Colonic mucosa (tissue), 4 donors: ENCODE measurements at regions of chr10 and their contacts with region 1.

Region 1: GRCh38 chr10:2978111-2978510 is 89.2 kb upstream of the PFKP start:
- DNase-seq: no peak
- H3K4me3 ChIP-seq: no peak overlapping the region
- H3K27ac ChIP-seq: no peak overlapping the region
- H3K4me1 ChIP-seq: no peaks in the 10 kb centered on the region
- H3K27me3 ChIP-seq: no peaks in the 10 kb centered on the region
- CTCF ChIP-seq: peak; percentile 35

Region 2: GRCh38 chr10:2839081-2839725 is 138.9 kb before region 1 on chr10:
- intact Hi-C with region 1: loop called (anchors 10 kb)
- DNase-seq: peak; percentile 44
- H3K4me3 ChIP-seq: no peak overlapping the region
- H3K27ac ChIP-seq: no peak overlapping the region
- H3K4me1 ChIP-seq: no peaks in the 10 kb centered on the region
- H3K27me3 ChIP-seq: no peaks in the 10 kb centered on the region
- CTCF ChIP-seq: peak; percentile 50

Region 3: GRCh38 chr10:2927958-2928840 is 49.9 kb before region 1 on chr10:
- intact Hi-C with region 1: loop called (anchors 5 kb)
- DNase-seq: peak; percentile 80
- H3K4me3 ChIP-seq: no peak overlapping the region
- H3K27ac ChIP-seq: no peak overlapping the region
- H3K4me1 ChIP-seq: no peaks in the 10 kb centered on the region
- H3K27me3 ChIP-seq: no peaks in the 10 kb centered on the region
- CTCF ChIP-seq: peak; percentile 78